Activated CD8-positive, alpha-beta memory T cell treated with anti-CD3 and anti-CD28 coated beads, Interleukin-2, amount 10 ng/mL, durations not matched to agents 7 days and 5 days (primary cell): ENCODE measurements at regions of chr5 and their contacts with region 1.

Region 1: GRCh38 chr5:76715736-76716455 is at the start of gene F2R:
- DNase-seq: peak; percentile 77
- ATAC-seq: peak; percentile 82
- H3K4me3 Mint-ChIP-seq: peak within 1 kb of the TSS; percentile 89
- H3K27ac Mint-ChIP-seq: peak within 1 kb of the TSS; percentile 90
- H3K4me1 Mint-ChIP-seq: peaks cover 60% of the 10 kb centered on the region
- H3K27me3 Mint-ChIP-seq: peaks cover 2% of the 10 kb centered on the region
- total RNA-seq, gene F2R: 39.7 to 44.7 TPM

Region 2: GRCh38 chr5:76696251-76696650 is 19.6 kb before region 1 on chr5:
- CTCF ChIA-PET with region 1: no interaction called
- DNase-seq: no peak
- ATAC-seq: no peak
- H3K4me3 Mint-ChIP-seq: no peak overlapping the region
- H3K27ac Mint-ChIP-seq: no peak overlapping the region
- H3K4me1 Mint-ChIP-seq: peaks cover 36% of the 10 kb centered on the region
- H3K27me3 Mint-ChIP-seq: no peaks in the 10 kb centered on the region

Region 3: DNA sequence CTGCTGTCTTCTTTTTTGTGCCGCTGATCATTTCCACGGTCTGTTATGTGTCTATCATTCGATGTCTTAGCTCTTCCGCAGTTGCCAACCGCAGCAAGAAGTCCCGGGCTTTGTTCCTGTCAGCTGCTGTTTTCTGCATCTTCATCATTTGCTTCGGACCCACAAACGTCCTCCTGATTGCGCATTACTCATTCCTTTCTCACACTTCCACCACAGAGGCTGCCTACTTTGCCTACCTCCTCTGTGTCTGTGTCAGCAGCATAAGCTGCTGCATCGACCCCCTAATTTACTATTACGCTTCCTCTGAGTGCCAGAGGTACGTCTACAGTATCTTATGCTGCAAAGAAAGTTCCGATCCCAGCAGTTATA is 17.1 kb after region 1 on chr5:
- CTCF ChIA-PET with region 1: interaction called, 17 read pairs
- DNase-seq: peak; percentile 94
- ATAC-seq: peak; percentile 86
- H3K4me3 Mint-ChIP-seq: peak overlapping the region; percentile 65
- H3K27ac Mint-ChIP-seq: peak overlapping the region; percentile 95
- H3K4me1 Mint-ChIP-seq: peaks cover 68% of the 10 kb centered on the region
- H3K27me3 Mint-ChIP-seq: no peaks in the 10 kb centered on the region